ENCODE measurements at regions of chr7 and their contacts with region 1.

Region 1: GRCh38 chr7:116316833-116317612 is 106.7 kb downstream of the TES start:
- DNase-seq: peak; percentile 100
- H3K4me3 ChIP-seq: peak overlapping the region in 2 of 3 experiments; percentile 4 to 10
- H3K27ac ChIP-seq: peak overlapping the region; percentile 94
- H3K4me1 ChIP-seq: peaks cover 24% of the 10 kb centered on the region
- H3K27me3 ChIP-seq: no peaks in the 10 kb centered on the region
- CTCF ChIP-seq: no peak

Region 2: DNA sequence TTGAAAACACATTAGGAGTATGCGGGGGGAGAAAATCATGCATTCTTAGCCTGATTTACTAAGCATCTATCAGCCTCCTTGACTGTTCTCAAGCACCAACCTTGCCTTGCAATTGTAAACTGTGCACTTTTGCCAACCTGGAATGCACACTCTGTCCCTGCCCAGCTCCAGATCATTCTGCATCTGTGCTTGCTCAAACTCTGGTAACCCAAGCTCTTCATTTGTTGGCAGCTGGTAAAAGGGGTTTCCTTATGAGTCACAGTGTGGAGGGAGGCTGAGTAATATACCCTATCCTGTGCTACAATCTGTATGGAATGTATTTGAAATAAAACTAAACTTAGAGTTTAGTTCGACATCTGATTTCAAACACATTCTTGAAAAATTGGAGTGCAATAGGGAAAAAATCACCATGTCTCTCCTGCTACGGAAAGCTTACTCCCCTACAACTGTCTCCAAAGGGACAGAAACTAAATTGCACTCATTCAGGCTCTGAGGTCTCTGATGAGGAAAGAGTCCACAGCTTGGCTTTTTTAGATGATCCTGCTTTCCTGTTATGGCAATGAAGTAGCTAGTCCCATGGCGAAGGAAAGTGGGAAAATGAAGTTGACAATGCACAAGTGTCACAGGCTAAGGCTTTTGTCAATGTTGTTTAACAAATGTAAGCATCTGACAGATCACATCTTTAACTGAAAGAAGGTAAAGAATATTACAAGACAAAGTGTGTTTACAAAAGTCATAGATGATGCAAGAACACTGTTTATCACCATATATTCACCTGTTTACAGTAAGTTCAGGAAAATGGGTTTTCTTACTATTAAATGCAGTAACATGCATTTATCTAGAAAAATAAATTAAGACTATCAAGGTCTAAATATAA is 44.8 kb before region 1 on chr7:
- CTCF ChIA-PET with region 1: no interaction called
- dilution Hi-C with region 1: no loop called
- in situ Hi-C with region 1: no loop called
- intact Hi-C with region 1: loop called (anchors 1 kb)
- DNase-seq: peak; percentile 95
- H3K4me3 ChIP-seq: peak overlapping the region in 2 of 3 experiments; percentile 17 to 18
- H3K27ac ChIP-seq: peak overlapping the region; percentile 93
- H3K4me1 ChIP-seq: peaks cover 38% of the 10 kb centered on the region
- H3K27me3 ChIP-seq: no peaks in the 10 kb centered on the region
- CTCF ChIP-seq: no peak

Region 3: GRCh38 chr7:116340943-116341907 is 24.2 kb after region 1 on chr7:
- CTCF ChIA-PET with region 1: no interaction called
- dilution Hi-C with region 1: no loop called
- in situ Hi-C with region 1: no loop called
- intact Hi-C with region 1: loop called (anchors 2 kb)
- DNase-seq: no peak
- H3K4me3 ChIP-seq: no peak overlapping the region
- H3K27ac ChIP-seq: no peak overlapping the region
- H3K4me1 ChIP-seq: peaks cover 14% of the 10 kb centered on the region
- H3K27me3 ChIP-seq: no peaks in the 10 kb centered on the region
- CTCF ChIP-seq: peak; percentile 28 to 57

Region 4: DNA sequence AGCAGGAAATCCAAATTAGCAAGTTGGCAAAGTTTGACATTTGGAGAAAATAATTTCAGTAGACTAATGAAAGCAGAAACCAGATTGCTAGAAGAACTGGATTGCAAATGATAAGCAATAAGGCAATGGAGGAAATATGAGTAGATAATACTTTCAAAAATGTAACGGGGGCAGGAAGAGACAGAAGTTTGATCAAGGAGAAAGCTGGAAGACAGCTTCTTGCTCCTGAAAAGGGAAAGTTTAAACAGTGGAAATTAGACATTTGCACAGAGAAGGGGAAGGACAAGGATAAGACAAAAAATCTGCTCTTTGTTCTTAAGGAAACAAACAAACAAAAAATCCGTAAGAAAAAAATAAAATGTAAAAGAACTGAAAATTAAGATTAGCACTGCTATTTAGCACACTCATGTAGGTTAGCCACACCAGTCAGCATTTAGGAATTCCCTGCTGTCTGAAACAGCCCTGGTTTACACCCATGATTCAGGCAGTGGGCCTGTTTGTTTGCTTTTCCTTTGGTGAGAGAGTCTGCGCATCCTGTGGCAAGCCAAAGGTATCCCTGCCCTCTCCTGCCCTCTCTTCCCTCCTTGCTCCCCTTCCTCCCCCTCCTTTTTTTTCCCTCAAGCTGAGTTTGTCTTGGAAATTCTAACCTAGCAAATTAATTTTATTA is 78.2 kb after region 1 on chr7:
- CTCF ChIA-PET with region 1: no interaction called
- dilution Hi-C with region 1: no loop called
- in situ Hi-C with region 1: no loop called
- intact Hi-C with region 1: loop called (anchors 1 kb)
- DNase-seq: peak; percentile 93
- H3K4me3 ChIP-seq: peak overlapping the region in 1 of 3 experiments; percentile 2
- H3K27ac ChIP-seq: peak overlapping the region; percentile 98
- H3K4me1 ChIP-seq: peaks cover 32% of the 10 kb centered on the region
- H3K27me3 ChIP-seq: no peaks in the 10 kb centered on the region
- CTCF ChIP-seq: no peak

Region 5: GRCh38 chr7:116464375-116464774 is 147.4 kb after region 1 on chr7:
- CTCF ChIA-PET with region 1: no interaction called
- dilution Hi-C with region 1: no loop called
- in situ Hi-C with region 1: no loop called
- intact Hi-C with region 1: no loop called
- DNase-seq: no peak
- H3K4me3 ChIP-seq: no peak overlapping the region
- H3K27ac ChIP-seq: no peak overlapping the region
- H3K4me1 ChIP-seq: peaks cover 12% of the 10 kb centered on the region
- H3K27me3 ChIP-seq: no peaks in the 10 kb centered on the region
- CTCF ChIP-seq: no peak

Region 6: DNA sequence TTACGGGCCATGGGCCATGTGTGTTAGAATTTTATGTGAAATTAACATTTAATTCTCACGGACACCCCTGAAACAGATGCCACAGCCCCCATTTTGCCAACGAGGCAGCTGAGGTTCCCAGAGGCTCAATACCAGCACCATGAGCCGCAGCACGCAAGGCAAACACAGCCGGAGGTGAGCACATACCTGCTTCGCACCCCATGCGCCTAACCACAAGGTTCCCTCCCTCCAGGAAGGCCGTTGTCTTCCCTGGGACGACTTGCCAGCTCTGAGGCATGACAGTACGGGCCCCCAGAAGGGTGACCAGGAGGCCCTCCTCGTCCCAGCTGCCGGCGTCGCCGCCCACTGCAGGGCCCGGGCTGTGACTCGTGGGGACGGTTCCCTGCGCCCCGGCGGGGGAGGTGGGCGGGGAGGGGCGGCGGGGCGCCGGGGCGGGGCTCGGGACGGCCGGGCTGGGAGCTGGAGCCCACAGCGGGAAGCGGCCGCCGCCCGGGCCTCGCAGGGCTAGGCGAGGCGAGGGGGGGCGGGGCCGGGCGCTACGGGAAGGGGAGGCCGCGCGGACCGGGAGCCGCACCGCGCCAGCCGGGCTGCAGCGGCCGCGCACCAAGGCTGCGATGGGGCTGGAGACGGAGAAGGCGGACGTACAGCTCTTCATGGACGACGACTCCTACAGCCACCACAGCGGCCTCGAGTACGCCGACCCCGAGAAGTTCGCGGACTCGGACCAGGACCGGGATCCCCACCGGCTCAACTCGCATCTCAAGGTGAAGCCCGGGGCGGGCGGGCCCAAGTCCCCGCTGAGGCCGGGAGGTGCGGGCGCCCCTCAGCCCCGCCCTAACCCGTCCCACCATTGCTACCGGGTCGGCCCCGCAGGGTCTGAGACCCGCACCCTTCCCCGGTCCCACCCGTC is 182.4 kb after region 1 on chr7 and contains the start of gene CAV2:
- CTCF ChIA-PET with region 1: no interaction called
- dilution Hi-C with region 1: no loop called
- in situ Hi-C with region 1: no loop called
- intact Hi-C with region 1: loop called (anchors 1 kb)
- DNase-seq: peak; percentile 96
- H3K4me3 ChIP-seq: peak within 1 kb of the TSS; percentile 59 to 98 (median 80)
- H3K27ac ChIP-seq: peak within 1 kb of the TSS; percentile 99
- H3K4me1 ChIP-seq: peaks cover 34% of the 10 kb centered on the region
- H3K27me3 ChIP-seq: no peaks in the 10 kb centered on the region
- CTCF ChIP-seq: no peak
- total RNA-seq, gene CAV2: 253 to 385 TPM

Measured in mammary epithelial cell (primary cell).